Activated CD8-positive, alpha-beta memory T cell treated with anti-CD3 and anti-CD28 coated beads, Interleukin-2, amount 10 ng/mL, durations not matched to agents 7 days and 5 days (primary cell): ENCODE measurements at regions of chr17 and their contacts with region 1.

Region 1: GRCh38 chr17:75589012-75589918 is 1.7 kb downstream of the MYO15B start:
- DNase-seq: peak; percentile 97
- ATAC-seq: peak; percentile 82
- H3K4me3 Mint-ChIP-seq: peak overlapping the region; percentile 71
- H3K27ac Mint-ChIP-seq: peak overlapping the region; percentile 70
- H3K4me1 Mint-ChIP-seq: peaks cover 12% of the 10 kb centered on the region
- H3K27me3 Mint-ChIP-seq: peaks cover 27% of the 10 kb centered on the region

Region 2: DNA sequence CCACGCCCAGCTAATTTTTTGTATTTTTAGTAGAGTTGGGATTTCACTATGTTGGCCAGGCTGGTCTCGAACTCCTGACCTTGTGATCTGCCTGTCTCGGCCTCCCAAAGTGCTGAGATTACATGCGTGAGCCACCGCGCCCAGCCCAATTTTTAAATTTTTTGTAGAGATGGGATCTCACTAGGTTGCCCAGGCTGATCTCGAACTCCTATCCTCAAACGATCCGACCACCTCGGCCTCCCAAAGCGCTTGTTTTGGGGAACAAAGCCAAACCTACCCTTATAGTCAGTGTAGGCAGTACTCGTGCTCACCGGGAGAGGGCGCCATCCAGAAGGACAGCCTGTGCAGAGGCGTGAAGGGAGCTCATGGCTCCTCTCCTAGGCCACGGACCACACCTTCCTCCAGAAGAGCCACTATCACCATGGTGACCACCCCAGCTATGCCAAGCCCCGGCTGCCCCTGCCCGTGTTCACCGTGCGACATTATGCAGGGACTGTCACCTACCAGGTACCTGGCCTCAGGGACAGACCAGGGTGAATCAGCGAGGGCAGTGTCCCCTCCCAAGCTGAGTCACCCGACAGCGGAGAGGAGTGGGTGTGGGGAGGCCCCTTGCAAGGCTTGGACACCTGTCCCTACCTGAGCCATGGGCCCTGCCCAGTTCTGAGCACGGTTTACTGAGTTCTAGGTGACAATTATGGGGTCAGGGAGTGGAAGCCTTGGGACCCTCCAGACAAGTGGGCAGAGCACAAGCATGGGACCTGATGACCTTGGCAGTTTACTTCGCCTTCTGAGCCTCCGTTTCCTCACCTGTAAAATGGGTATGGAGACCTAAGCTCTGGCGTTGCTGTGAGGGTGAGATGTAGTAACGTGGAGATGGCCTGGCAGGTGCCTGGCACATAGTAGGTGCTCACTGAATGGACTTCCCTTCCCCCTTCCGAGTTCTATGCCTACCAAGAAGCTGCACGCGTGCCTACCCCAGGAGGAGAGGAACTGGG is 12.1 kb after region 1 on chr17:
- CTCF ChIA-PET with region 1: interaction called, 47 read pairs
- DNase-seq: peak; percentile 79
- ATAC-seq: peak; percentile 83
- H3K4me3 Mint-ChIP-seq: no peak overlapping the region
- H3K27ac Mint-ChIP-seq: no peak overlapping the region
- H3K4me1 Mint-ChIP-seq: no peaks in the 10 kb centered on the region
- H3K27me3 Mint-ChIP-seq: no peaks in the 10 kb centered on the region

Region 3: GRCh38 chr17:75611851-75612454 is 22.7 kb after region 1 on chr17:
- CTCF ChIA-PET with region 1: no interaction called
- DNase-seq: no peak
- ATAC-seq: no peak
- H3K4me3 Mint-ChIP-seq: no peak overlapping the region
- H3K27ac Mint-ChIP-seq: no peak overlapping the region
- H3K4me1 Mint-ChIP-seq: peaks cover 5% of the 10 kb centered on the region
- H3K27me3 Mint-ChIP-seq: no peaks in the 10 kb centered on the region